ENCODE measurements at regions of chr1 and their contacts with region 1.

Region 1: DNA sequence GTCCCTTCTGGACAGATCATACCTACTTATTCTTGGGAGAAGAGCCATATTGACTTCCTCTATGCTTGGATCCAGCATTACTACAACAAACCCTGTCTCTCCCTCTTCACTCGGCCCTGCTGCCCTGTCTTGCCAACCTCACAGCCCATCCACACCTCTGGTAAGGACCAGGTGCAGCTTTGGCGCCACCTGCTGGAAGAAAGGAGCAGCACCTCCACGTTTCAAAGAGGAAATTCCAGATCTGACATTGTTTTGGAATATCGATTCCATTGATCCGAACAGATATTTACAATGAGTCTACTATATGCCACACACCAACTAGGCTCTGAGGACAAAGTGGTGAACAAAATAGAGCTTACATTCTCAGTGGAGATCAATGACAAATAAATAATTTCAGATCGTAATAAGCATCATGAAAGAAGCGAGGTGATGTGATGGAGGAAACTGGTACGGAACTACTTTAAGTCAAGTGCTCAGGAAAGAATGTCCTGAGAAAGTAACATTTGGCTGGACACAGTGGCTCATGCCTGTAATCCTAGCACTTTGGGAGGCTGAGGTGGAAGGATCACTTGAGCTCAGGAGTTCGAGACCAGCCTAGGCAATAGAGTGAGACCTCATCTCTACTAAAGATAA is 18.7 kb downstream of the MFSD2A start:
- DNase-seq: peak; percentile 84
- ATAC-seq: peak; percentile 85
- H3K4me3 Mint-ChIP-seq: no peak overlapping the region
- H3K27ac Mint-ChIP-seq: no peak overlapping the region
- H3K4me1 Mint-ChIP-seq: no peaks in the 10 kb centered on the region
- H3K27me3 Mint-ChIP-seq: no peaks in the 10 kb centered on the region
- CTCF ChIP-seq: peak; percentile 99

Region 2: DNA sequence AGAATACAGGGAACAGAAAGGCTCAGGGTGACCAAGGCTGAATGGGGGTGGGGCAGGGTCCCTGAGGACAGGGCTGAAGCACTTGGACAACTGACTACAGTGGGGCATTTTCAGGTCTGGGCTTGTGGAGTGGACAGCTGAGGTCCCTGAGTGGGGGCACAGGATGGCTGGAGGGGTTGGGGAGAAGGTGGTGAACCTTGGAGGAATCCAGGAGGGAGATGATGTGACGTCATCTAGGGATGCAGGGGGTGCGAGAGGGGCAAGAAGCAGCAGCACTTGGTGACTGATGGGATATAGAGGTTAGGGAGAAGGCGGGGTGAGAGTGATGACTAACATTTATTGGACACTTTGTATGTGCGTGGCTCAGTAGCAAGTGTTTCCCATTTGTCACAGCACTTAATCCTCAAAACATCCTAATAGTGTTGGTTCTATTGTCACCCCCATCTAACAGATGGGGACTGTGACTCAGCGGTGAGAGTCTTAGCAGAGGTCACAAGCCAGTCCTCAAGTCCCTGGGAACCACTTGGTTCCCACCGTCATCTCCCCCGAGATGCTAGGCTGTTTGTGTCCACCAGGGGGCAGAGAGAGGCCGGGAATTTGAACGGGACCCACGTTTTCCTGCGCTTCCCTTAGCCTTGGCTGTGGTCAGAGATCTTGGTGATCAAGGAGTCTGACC is 157.1 kb before region 1 on chr1:
- CTCF ChIA-PET with region 1: interaction called, 36 read pairs
- POLR2A ChIA-PET with region 1: interaction called, 3 read pairs
- intact Hi-C with region 1: loop called (anchors 5 kb)
- DNase-seq: peak; percentile 69
- ATAC-seq: peak; percentile 82
- H3K4me3 Mint-ChIP-seq: peak overlapping the region; percentile 39
- H3K27ac Mint-ChIP-seq: no peak overlapping the region
- H3K4me1 Mint-ChIP-seq: peaks cover 14% of the 10 kb centered on the region
- H3K27me3 Mint-ChIP-seq: peaks cover 16% of the 10 kb centered on the region
- CTCF ChIP-seq: peak; percentile 77

Region 3: GRCh38 chr1:39901698-39902459 is 71.7 kb before region 1 on chr1 and contains the start of gene MYCL:
- CTCF ChIA-PET with region 1: interaction called, 13 read pairs
- POLR2A ChIA-PET with region 1: interaction called, 3 read pairs
- intact Hi-C with region 1: no loop called
- DNase-seq: peak; percentile 85
- ATAC-seq: peak; percentile 89
- H3K4me3 Mint-ChIP-seq: peak within 1 kb of the TSS; percentile 70
- H3K27ac Mint-ChIP-seq: no peak within 1 kb of the TSS
- H3K4me1 Mint-ChIP-seq: no peaks in the 10 kb centered on the region
- H3K27me3 Mint-ChIP-seq: peaks cover 55% of the 10 kb centered on the region
- CTCF ChIP-seq: peak; percentile 75
- total RNA-seq, gene MYCL: 0.13 to 0.20 TPM

Region 4: GRCh38 chr1:39954816-39955546 is 18.6 kb before region 1 on chr1 and contains the start of gene MFSD2A:
- CTCF ChIA-PET with region 1: interaction called, 25 read pairs
- POLR2A ChIA-PET with region 1: interaction called, 11 read pairs
- intact Hi-C with region 1: no loop called
- DNase-seq: peak; percentile 95
- ATAC-seq: peak; percentile 93
- H3K4me3 Mint-ChIP-seq: peak within 1 kb of the TSS; percentile 92
- H3K27ac Mint-ChIP-seq: peak within 1 kb of the TSS; percentile 89
- H3K4me1 Mint-ChIP-seq: peaks cover 34% of the 10 kb centered on the region
- H3K27me3 Mint-ChIP-seq: no peaks in the 10 kb centered on the region
- CTCF ChIP-seq: no peak
- total RNA-seq, gene MFSD2A: 15.0 to 19.3 TPM

Region 5: DNA sequence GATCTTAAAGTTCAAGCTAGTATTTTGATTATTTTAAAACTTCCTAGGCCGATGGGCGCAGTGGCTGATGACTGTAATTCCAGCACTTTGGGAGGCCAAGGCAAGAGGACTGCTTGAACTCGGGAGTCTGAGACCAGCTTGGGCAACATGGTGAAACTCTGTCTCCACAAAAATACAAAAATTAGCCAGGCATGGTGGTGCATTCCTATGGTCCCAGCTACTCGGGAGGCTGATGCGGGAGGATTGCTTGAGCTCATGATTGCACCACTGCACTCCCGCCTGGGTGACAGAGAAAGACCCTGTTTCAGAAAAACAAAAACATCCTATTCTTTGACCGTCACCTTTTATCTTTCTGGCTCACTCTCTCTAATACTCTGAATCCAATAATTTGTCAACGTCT is 11.3 kb after region 1 on chr1:
- CTCF ChIA-PET with region 1: interaction called, 12 read pairs
- POLR2A ChIA-PET with region 1: interaction called, 4 read pairs
- intact Hi-C with region 1: no loop called
- DNase-seq: no peak
- ATAC-seq: no peak
- H3K4me3 Mint-ChIP-seq: no peak overlapping the region
- H3K27ac Mint-ChIP-seq: no peak overlapping the region
- H3K4me1 Mint-ChIP-seq: no peaks in the 10 kb centered on the region
- H3K27me3 Mint-ChIP-seq: no peaks in the 10 kb centered on the region
- CTCF ChIP-seq: no peak